ENCODE measurements at regions of chr6 and their contacts with region 1.

Region 1: GRCh38 chr6:105733565-105734162 is 330.8 kb upstream of the PREP start:
- DNase-seq: no peak
- ATAC-seq: no peak
- H3K4me3 ChIP-seq: no peak overlapping the region
- H3K27ac ChIP-seq: no peak overlapping the region
- H3K4me1 ChIP-seq: peaks cover 0 to 7% (median 0%) of the 10 kb centered on the region in 9 donors
- H3K27me3 ChIP-seq: no peaks in the 10 kb centered on the region
- CTCF ChIP-seq: peak; percentile 29 to 77 (median 69)

Region 2: DNA sequence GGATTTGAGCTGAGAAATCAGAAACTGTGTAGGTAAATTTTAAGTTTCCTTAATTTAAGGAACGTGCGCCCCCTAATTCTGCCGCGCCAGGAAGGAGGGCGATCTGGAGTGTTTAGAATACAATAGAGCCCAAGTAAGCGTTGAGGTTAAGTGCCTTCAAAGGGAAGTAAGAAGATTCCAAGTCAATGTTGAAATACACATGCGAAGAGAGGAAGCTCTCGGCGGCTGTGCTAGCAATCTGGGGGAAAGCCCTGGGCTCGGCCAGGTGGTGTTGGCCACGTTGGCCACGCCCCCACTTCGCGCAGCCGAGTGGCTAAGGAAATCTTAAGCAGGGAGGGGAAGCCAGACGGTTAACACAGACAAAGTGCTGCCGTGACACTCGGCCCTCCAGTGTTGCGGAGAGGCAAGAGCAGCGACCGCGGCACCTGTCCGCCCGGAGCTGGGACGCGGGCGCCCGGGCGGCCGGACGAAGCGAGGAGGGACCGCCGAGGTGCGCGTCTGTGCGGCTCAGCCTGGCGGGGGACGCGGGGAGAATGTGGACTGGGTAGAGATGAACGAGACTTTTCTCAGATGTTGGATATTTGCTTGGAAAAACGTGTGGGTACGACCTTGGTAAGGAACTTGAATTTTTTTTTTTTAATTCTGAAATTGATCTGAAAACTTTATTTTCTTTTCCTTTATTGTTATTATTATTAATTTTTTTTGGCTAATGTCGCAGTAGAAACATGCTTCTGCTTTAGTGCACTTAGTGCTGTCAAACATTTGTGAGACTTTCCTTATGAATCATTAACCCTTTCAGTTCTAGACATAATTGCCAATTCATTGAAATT is 352.5 kb after region 1 on chr6 and contains the start of gene PRDM1:
- intact Hi-C with region 1: loop called in 3 of 10 experiments (anchors 5 to 10 kb)
- DNase-seq: peak; percentile 72
- ATAC-seq: peak; percentile 51 to 80 (median 73)
- H3K4me3 ChIP-seq: peak within 1 kb of the TSS; percentile 39 to 69 (median 56)
- H3K27ac ChIP-seq: peak within 1 kb of the TSS; percentile 33 to 91 (median 68)
- H3K4me1 ChIP-seq: peaks cover 0 to 78% (median 20%) of the 10 kb centered on the region in 9 donors
- H3K27me3 ChIP-seq: peaks cover 0 to 64% (median 37%) of the 10 kb centered on the region in 7 donors
- CTCF ChIP-seq: peak in 2 of 9 donors; percentile 26 to 29
- total RNA-seq, gene PRDM1: 0.47 to 11.2 (median 2.1) TPM

Region 3: DNA sequence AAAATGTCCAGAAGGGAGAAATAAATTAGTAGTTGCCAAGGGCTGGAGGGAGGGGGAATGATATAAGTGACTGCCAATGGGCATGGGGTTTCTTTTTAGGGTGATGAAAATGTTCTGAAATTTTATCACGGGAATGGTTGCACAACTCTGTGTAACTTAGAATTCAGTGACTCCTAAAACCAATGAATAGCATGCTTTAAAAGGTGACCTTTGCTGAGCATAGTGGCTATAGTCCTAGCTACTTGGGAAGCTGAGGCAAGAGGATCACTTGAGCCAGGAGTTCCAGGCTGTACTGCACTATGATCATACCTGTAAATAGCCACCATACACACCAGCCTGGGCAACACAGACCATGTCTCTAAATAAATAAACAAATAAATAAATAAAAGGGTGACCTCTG is 482.9 kb after region 1 on chr6:
- intact Hi-C with region 1: loop called in 6 of 10 experiments (anchors 5 to 10 kb)
- DNase-seq: no peak
- ATAC-seq: no peak
- H3K4me3 ChIP-seq: no peak overlapping the region
- H3K27ac ChIP-seq: no peak overlapping the region
- H3K4me1 ChIP-seq: peaks cover 0 to 5% (median 0%) of the 10 kb centered on the region in 9 donors
- H3K27me3 ChIP-seq: no peaks in the 10 kb centered on the region
- CTCF ChIP-seq: no peak

Region 4: DNA sequence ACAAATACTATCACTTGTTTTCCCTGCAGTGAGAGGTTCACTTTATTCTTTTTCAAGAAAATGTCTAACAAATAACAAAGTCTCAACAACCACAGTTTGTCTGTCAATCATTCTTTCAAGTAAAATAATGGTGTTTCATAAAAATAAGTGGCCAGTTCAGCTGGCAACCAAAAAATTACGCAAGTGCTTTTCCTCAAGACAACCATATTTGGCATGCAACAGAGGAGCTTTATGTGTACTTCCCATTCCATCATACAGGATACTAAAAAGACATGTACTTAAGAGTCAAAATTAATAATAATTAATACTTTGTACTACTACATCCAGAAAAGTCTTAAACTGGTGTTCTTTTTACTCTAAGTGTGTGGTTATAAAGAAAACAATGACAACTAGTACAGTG is 557.3 kb after region 1 on chr6:
- intact Hi-C with region 1: loop called in 1 of 10 experiments (anchors 10 kb)
- DNase-seq: no peak
- ATAC-seq: no peak
- H3K4me3 ChIP-seq: no peak overlapping the region
- H3K27ac ChIP-seq: no peak overlapping the region
- H3K4me1 ChIP-seq: no peaks in the 10 kb centered on the region
- H3K27me3 ChIP-seq: no peaks in the 10 kb centered on the region
- CTCF ChIP-seq: no peak

Measured in heart right ventricle (tissue), 16 donors.